ENCODE measurements at regions of chr21 and their contacts with region 1.

Region 1: DNA sequence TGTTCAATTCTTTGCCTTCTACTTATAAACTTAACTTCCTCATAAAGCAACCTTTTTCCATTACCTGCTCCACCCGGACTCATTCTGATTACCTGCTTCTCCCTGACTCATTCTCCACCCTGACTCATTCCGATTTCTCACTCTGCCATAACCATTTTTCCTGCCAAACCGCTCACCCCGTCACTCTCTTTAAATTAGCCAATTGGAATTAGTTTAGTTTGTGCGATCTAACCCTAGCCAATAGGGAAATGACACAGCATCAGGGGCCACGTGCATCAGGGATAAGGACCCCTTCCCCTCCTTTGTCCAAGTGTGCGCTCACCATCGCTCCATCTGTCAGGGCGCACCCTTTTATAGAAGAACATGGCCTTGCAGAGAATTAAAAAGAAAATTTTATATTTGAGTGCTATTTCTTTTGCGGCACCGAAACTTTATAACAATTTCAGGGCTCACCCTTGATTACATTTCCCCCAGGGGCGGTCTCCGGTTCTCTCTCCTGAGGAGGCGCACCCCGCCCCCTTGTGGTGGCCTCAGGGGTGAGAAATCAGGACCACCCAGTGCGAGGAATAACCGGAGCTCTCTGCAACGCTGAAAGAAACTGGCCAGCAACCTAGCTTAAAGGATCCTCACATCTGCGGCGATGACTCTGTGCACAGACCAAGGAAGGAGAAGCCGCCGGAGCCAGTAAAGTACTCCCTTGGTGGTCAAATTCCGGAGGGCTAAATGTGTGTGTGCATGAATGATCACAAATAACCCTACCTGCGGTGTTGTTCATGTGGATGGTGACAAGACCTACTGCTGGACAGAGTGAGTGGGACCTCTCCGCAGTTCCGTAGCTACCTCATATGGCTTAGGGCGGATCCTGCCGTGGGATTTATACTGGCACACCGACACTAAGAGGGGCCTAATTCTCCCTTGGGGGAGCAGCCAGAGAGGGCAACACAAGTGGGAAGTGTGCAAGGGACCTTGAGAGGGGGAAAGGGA is 30.3 kb upstream of the CBR3 start:
- DNase-seq: peak; percentile 83
- H3K4me3 Mint-ChIP-seq: peak overlapping the region; percentile 59
- H3K27ac Mint-ChIP-seq: peak overlapping the region; percentile 67
- H3K4me1 Mint-ChIP-seq: peaks cover 16% of the 10 kb centered on the region
- H3K27me3 Mint-ChIP-seq: peaks cover 47% of the 10 kb centered on the region

Region 2: DNA sequence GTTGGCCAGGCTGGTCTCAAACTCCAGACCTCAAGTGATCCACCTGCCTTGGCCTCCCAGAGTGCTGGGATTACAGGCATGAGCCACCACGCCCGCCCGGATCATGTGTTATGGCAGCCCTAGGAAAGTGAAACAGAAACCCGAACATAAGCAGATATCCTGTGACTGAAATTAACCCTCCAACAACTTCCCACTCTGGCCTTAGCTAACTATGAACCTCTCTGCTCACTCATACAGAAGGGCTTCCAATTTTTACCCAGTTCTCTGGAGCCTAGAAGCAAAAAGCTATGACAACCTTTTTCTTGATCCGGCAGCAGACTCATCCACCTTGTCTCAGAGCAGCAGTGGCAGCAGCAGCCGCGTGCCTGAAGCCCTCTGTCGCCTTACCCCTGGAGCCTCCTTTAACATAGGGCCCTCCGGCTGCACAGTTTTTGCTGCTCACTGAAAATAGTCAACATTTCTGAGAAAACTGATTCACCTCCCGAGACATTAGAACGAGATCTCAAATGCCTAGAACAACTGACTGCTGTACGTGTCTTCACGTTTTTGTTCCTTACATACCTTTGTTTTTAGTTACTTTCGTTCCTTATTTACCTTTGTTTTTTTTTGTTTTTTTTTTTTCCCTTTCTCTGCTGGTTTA is 25.5 kb before region 1 on chr21:
- intact Hi-C with region 1: loop called (anchors 2 kb)
- DNase-seq: peak; percentile 85
- H3K4me3 Mint-ChIP-seq: peak overlapping the region; percentile 69
- H3K27ac Mint-ChIP-seq: peak overlapping the region; percentile 93
- H3K4me1 Mint-ChIP-seq: peaks cover 38% of the 10 kb centered on the region
- H3K27me3 Mint-ChIP-seq: no peaks in the 10 kb centered on the region

Region 3: GRCh38 chr21:36388835-36389234 is 284.2 kb after region 1 on chr21:
- intact Hi-C with region 1: no loop called
- DNase-seq: no peak
- H3K4me3 Mint-ChIP-seq: no peak overlapping the region
- H3K27ac Mint-ChIP-seq: no peak overlapping the region
- H3K4me1 Mint-ChIP-seq: peaks cover 16% of the 10 kb centered on the region
- H3K27me3 Mint-ChIP-seq: no peaks in the 10 kb centered on the region